HEK293 (cell line): ENCODE measurements at regions of chr10 and their contacts with region 1.

Region 1: DNA sequence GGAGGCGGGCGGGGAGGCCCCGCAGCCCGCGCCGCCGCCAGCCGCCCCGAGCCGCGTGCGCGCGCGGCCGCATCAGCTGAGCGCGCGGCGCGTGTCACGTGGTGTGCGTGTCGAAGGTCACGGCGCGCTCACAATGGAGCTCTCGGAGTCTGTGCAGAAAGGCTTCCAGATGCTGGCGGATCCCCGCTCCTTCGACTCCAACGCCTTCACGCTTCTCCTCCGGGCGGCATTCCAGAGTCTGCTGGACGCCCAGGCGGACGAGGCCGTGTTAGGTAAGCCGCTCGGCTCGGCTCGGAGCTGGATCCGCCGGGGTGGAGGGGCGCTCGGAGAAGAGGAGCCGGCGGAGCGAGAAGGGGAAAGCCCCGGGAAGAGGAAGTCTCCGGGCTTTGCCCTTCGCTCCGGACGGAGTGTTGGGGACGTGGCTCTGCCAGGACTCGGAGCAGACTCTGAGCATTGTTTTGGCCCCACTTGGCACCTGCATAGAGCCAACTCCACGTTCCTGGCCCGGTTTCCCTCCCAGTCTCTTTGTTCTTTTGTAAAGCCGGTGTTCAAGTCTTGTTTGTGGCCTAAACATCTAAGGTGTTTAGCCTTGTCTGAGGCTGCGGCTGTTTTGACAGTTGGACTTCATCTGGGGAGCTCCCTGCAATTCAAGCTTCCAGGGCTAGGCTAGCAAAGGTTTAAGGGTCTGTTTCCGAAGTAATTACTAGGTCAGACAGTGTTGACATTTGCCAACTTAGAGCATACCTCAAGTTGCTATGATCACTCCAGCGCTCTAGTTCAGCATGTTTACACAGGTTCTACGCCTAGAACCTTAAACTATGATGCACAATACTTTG is at the start of gene COMMD3:
- H3K4me3 ChIP-seq: peak within 1 kb of the TSS; percentile 75
- H3K27ac ChIP-seq: peak within 1 kb of the TSS; percentile 96
- H3K4me1 ChIP-seq: peaks cover 14% of the 10 kb centered on the region; the same call in 1 of the 2 replicates
- CTCF ChIP-seq: no peak

Region 2: GRCh38 chr10:21445163-21445562 is 871.3 kb before region 1 on chr10:
- CTCF ChIA-PET with region 1: no interaction called
- POLR2A ChIA-PET with region 1: no interaction called
- H3K4me3 ChIP-seq: no peak overlapping the region
- H3K27ac ChIP-seq: no peak overlapping the region
- H3K4me1 ChIP-seq: no peaks in the 10 kb centered on the region
- CTCF ChIP-seq: no peak

Region 3: DNA sequence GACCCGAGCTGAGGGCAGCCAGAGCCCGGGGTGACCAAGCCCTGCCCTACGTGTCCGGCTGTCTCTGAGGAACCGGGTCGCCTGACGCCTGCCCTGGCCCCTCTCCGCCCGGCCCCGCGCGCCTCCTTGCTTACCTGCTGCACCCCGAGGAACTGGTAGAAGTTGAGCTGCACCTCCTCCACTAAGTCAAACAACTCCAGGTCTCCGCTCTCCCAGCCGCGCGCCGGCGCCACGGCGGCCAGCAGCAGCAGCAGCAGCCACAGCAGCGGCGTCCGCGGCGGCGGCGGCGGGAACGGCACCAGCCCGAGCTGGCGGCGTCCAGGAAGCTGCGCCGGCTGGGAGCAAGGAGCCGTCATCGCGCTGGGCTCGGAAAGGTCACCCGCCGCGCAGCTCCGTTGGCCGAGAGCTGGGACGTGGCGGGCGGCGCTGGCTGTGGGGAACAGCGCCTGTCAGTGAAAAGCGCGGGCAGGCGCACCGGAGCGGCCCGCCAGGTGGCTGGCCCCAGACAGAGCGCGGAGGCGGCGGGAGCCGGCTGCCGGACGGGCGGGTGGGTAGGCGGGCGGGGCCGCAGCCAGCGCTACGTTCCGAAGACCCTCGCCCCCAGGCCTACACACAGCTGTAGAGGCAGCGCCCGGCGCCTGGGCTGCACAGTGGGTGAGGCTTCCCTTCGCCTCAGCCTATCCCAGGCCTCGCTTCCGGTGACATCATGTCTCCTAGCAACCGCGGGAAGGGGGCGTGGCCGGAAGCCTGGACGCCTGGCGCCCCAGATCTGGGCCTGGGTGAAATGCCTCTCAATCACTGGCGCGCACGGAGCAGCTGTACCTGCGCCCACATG is 313.2 kb before region 1 on chr10 and contains the start of gene DNAJC1:
- CTCF ChIA-PET with region 1: no interaction called
- POLR2A ChIA-PET with region 1: interaction called, 15 read pairs
- H3K4me3 ChIP-seq: peak within 1 kb of the TSS; percentile 80
- H3K27ac ChIP-seq: peak within 1 kb of the TSS; percentile 87
- H3K4me1 ChIP-seq: no peaks in the 10 kb centered on the region
- CTCF ChIP-seq: no peak

Region 4: GRCh38 chr10:22340362-22341189 is 24.1 kb after region 1 on chr10:
- CTCF ChIA-PET with region 1: interaction called, 3 read pairs
- POLR2A ChIA-PET with region 1: interaction called, 19 read pairs
- H3K4me3 ChIP-seq: peak overlapping the region; percentile 78
- H3K27ac ChIP-seq: peak overlapping the region; percentile 99
- H3K4me1 ChIP-seq: peaks cover 6% of the 10 kb centered on the region
- CTCF ChIP-seq: no peak

Region 5: GRCh38 chr10:22443175-22443901 is 126.8 kb after region 1 on chr10:
- CTCF ChIA-PET with region 1: no interaction called
- POLR2A ChIA-PET with region 1: no interaction called
- H3K4me3 ChIP-seq: no peak overlapping the region
- H3K27ac ChIP-seq: no peak overlapping the region
- H3K4me1 ChIP-seq: peaks cover 4% of the 10 kb centered on the region; the same call in 1 of the 2 replicates
- CTCF ChIP-seq: no peak